HepG2 (cell line): ENCODE measurements at regions of chr20 and their contacts with region 1.

Region 1: GRCh38 chr20:47356526-47357295 is at the start of gene ZMYND8:
- DNase-seq: peak; percentile 99
- ATAC-seq: peak; percentile 43
- H3K4me3 ChIP-seq: peak within 1 kb of the TSS; percentile 72 to 81 (median 73)
- H3K27ac ChIP-seq: peak within 1 kb of the TSS; percentile 99
- H3K4me1 ChIP-seq: peaks cover 78% of the 10 kb centered on the region
- H3K27me3 ChIP-seq: no peaks in the 10 kb centered on the region; a peak in 1 of 5 replicates
- CTCF ChIP-seq: no peak
- EP300 ChIP-seq: 0 out of 4 replicates have a peak, but pooled peaks of 1 of the 2 experiments have one; percentile 21
- POLR2A ChIP-seq: peak; percentile 66 to 84
- RAD21 ChIP-seq: no peak; the same call in 1 of the 2 replicates
- total RNA-seq, gene ZMYND8: 53.9 and 71.9 TPM in 2 replicates

Region 2: GRCh38 chr20:47164140-47164539 is 192.6 kb before region 1 on chr20:
- CTCF ChIA-PET with region 1: no interaction called
- POLR2A ChIA-PET with region 1: no interaction called
- in situ Hi-C with region 1: no loop called
- intact Hi-C with region 1: no loop called
- DNase-seq: no peak
- ATAC-seq: no peak
- H3K4me3 ChIP-seq: no peak overlapping the region
- H3K27ac ChIP-seq: no peak overlapping the region
- H3K4me1 ChIP-seq: peaks cover 27% of the 10 kb centered on the region
- H3K27me3 ChIP-seq: peaks cover 2 to 9% of the 10 kb centered on the region in 2 experiments; a peak in 3 of 5 replicates
- CTCF ChIP-seq: no peak
- EP300 ChIP-seq: no peak
- POLR2A ChIP-seq: no peak
- RAD21 ChIP-seq: no peak

Region 3: GRCh38 chr20:47204008-47204849 is 152.5 kb before region 1 on chr20:
- CTCF ChIA-PET with region 1: no interaction called
- POLR2A ChIA-PET with region 1: interaction called, 22 read pairs
- in situ Hi-C with region 1: no loop called
- intact Hi-C with region 1: no loop called
- DNase-seq: no peak
- ATAC-seq: no peak
- H3K4me3 ChIP-seq: no peak overlapping the region
- H3K27ac ChIP-seq: no peak overlapping the region
- H3K4me1 ChIP-seq: peaks cover 62% of the 10 kb centered on the region
- H3K27me3 ChIP-seq: no peaks in the 10 kb centered on the region
- CTCF ChIP-seq: no peak
- EP300 ChIP-seq: no peak
- POLR2A ChIP-seq: no peak
- RAD21 ChIP-seq: no peak

Region 4: DNA sequence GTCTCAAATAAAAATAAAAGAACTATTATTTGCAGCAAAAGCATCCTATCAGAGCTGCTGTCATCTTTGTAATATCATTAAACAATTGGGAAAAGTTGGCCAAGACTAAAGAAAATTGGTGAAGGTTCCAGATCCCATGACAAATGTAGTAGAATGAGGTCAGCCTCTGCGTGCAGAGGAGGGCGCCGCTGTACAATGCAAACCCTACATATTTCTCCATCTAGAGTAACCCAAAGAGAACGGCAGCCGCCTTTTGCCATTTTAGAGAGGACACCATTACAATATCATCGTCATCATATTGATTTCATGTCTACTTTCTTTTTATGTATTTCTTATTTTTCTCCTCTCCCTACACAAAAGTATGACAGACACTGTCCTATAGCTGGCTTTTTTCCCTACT is 59.8 kb before region 1 on chr20:
- CTCF ChIA-PET with region 1: no interaction called
- POLR2A ChIA-PET with region 1: interaction called, 21 read pairs
- in situ Hi-C with region 1: no loop called
- intact Hi-C with region 1: no loop called
- DNase-seq: no peak
- ATAC-seq: peak; percentile 53
- H3K4me3 ChIP-seq: no peak overlapping the region
- H3K27ac ChIP-seq: no peak overlapping the region
- H3K4me1 ChIP-seq: no peaks in the 10 kb centered on the region
- H3K27me3 ChIP-seq: no peaks in the 10 kb centered on the region
- CTCF ChIP-seq: peak; percentile 67
- EP300 ChIP-seq: no peak
- POLR2A ChIP-seq: no peak
- RAD21 ChIP-seq: peak; percentile 48

Region 5: GRCh38 chr20:47334022-47334551 is 22.6 kb before region 1 on chr20:
- CTCF ChIA-PET with region 1: no interaction called
- POLR2A ChIA-PET with region 1: interaction called, 624 read pairs
- in situ Hi-C with region 1: no loop called
- intact Hi-C with region 1: loop called (anchors 2 kb)
- DNase-seq: peak; percentile 99
- ATAC-seq: peak; percentile 90
- H3K4me3 ChIP-seq: peak overlapping the region in 1 of 3 experiments; percentile 41; a peak in 1 of 6 replicates
- H3K27ac ChIP-seq: peak overlapping the region; percentile 57
- H3K4me1 ChIP-seq: peaks cover 97% of the 10 kb centered on the region
- H3K27me3 ChIP-seq: no peaks in the 10 kb centered on the region
- CTCF ChIP-seq: no peak
- EP300 ChIP-seq: peak; percentile 64 to 84; a peak in 2 of 4 replicates
- POLR2A ChIP-seq: no peak
- RAD21 ChIP-seq: no peak

Region 6: GRCh38 chr20:47379433-47380150 is 22.9 kb after region 1 on chr20:
- CTCF ChIA-PET with region 1: interaction called, 12 read pairs
- POLR2A ChIA-PET with region 1: interaction called, 264 read pairs
- in situ Hi-C with region 1: no loop called
- intact Hi-C with region 1: loop called (anchors 2 kb)
- DNase-seq: no peak
- ATAC-seq: peak; percentile 9; the same call in 2 of the 3 replicates
- H3K4me3 ChIP-seq: no peak overlapping the region
- H3K27ac ChIP-seq: no peak overlapping the region
- H3K4me1 ChIP-seq: peaks cover 45% of the 10 kb centered on the region
- H3K27me3 ChIP-seq: no peaks in the 10 kb centered on the region
- CTCF ChIP-seq: no peak
- EP300 ChIP-seq: no peak
- POLR2A ChIP-seq: no peak
- RAD21 ChIP-seq: no peak

Region 7: DNA sequence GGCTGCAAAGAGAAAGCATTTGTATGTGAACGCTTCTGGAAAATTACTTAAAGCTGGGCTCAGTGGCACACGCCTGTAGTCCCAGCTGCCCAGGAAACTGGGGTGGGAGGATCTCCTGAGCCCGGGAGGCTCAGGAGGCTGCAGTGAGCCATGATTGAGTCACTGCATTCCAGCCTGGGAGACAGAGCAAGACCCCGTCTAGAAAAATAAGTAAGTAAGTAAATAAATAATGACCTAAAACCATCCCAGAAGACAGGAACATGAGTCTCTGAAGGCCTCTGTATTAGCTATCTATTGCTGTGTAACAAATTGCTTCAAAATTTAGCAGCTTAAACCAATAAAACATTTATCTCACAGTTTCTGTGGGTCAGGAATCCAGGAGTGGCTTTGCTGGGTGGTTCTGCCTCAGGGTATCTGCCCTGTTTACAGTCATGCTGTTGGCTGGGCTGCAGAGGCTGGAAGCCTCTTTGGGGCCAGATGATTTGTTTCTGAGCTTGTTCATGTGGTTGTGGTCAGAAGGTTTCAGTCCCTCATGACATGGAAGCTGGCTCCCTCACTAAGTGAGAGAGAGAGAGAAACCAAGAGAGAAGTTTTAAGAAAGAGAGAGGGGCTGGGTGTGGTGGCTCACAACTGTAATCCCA is 96.6 kb after region 1 on chr20:
- CTCF ChIA-PET with region 1: no interaction called
- POLR2A ChIA-PET with region 1: interaction called, 47 read pairs
- in situ Hi-C with region 1: no loop called
- intact Hi-C with region 1: no loop called
- DNase-seq: peak; percentile 85
- ATAC-seq: no peak
- H3K4me3 ChIP-seq: no peak overlapping the region
- H3K27ac ChIP-seq: peak overlapping the region; percentile 83
- H3K4me1 ChIP-seq: peaks cover 93% of the 10 kb centered on the region
- H3K27me3 ChIP-seq: no peaks in the 10 kb centered on the region
- CTCF ChIP-seq: no peak
- EP300 ChIP-seq: peak in 1 of 2 experiments; percentile 81; a peak in 2 of 4 replicates
- POLR2A ChIP-seq: no peak
- RAD21 ChIP-seq: no peak